Activated CD8-positive, alpha-beta T cell treated with anti-CD3 and anti-CD28 coated beads, Interleukin-2, amount 10 ng/mL, durations not matched to agents 7 days and 5 days (primary cell): ENCODE measurements at regions of chr19 and their contacts with region 1.

Region 1: GRCh38 chr19:12333162-12334159 is at the start of gene ZNF563:
- DNase-seq: peak; percentile 99
- ATAC-seq: peak; percentile 99
- H3K4me3 Mint-ChIP-seq: peak within 1 kb of the TSS; percentile 96
- H3K27ac Mint-ChIP-seq: peak within 1 kb of the TSS; percentile 98
- H3K4me1 Mint-ChIP-seq: peaks cover 27% of the 10 kb centered on the region
- H3K27me3 Mint-ChIP-seq: no peaks in the 10 kb centered on the region
- total RNA-seq, gene ZNF563: 3.1 to 3.2 TPM

Region 2: DNA sequence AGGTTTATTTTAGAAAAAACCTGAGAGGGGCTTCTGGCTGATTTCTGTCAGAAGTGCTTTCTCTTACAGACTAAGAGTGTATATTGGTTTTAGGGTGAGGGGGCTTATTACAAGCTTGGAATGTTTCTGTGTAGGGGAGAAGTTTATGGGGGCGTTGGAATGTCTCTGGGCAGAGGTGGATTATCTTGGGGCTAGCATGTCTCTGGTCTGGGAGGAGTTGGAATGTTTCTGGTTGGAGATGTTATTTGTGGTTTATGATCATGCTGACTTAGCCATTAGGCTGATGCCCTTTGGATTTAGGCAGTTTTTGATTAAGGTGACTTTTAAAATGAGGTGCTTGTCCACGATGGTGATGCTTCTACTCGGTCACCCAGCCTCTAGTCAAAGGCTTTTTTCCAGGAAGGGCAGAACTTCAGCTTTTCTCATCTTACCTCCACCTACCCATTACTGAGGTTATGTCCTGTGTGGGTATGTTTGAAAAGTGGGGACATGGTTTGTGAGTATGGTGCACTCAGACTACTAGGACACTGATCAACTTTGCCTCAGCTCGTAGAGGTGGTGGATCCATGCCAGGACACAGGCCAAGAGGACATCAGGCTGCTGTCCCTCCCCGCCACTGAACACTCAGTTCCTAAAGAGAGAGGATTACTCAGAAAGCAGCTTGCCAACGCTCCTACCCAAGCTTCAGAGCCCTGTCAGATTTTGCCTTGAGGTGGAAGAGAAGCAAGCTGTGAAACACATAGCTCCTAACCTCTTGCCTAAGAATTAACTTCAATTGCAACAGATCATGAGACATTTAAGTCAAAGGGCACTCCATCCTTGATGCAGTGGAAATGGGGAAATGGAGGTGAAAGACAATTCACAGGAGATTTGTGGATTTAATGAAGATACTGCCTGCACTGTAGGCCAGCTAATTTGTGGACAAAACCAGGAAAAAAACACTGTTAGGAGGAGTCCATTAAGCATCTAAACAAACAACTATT is 102.4 kb before region 1 on chr19:
- CTCF ChIA-PET with region 1: no interaction called
- POLR2A ChIA-PET with region 1: no interaction called
- DNase-seq: no peak
- ATAC-seq: no peak
- H3K4me3 Mint-ChIP-seq: no peak overlapping the region
- H3K27ac Mint-ChIP-seq: no peak overlapping the region
- H3K4me1 Mint-ChIP-seq: no peaks in the 10 kb centered on the region
- H3K27me3 Mint-ChIP-seq: no peaks in the 10 kb centered on the region

Region 3: GRCh38 chr19:12287958-12288500 is 45.4 kb before region 1 on chr19:
- CTCF ChIA-PET with region 1: no interaction called
- POLR2A ChIA-PET with region 1: interaction called, 17 read pairs
- DNase-seq: no peak
- ATAC-seq: no peak
- H3K4me3 Mint-ChIP-seq: no peak overlapping the region
- H3K27ac Mint-ChIP-seq: no peak overlapping the region
- H3K4me1 Mint-ChIP-seq: peaks cover 36% of the 10 kb centered on the region
- H3K27me3 Mint-ChIP-seq: no peaks in the 10 kb centered on the region

Region 4: GRCh38 chr19:12294249-12295158 is 39.0 kb before region 1 on chr19 and contains the start of gene ZNF44:
- CTCF ChIA-PET with region 1: interaction called, 4 read pairs
- POLR2A ChIA-PET with region 1: interaction called, 21 read pairs
- DNase-seq: peak; percentile 98
- ATAC-seq: peak; percentile 98
- H3K4me3 Mint-ChIP-seq: peak within 1 kb of the TSS; percentile 99
- H3K27ac Mint-ChIP-seq: peak within 1 kb of the TSS; percentile 99
- H3K4me1 Mint-ChIP-seq: peaks cover 34% of the 10 kb centered on the region
- H3K27me3 Mint-ChIP-seq: no peaks in the 10 kb centered on the region
- total RNA-seq, gene ZNF44: 9.8 to 11.6 TPM

Region 5: GRCh38 chr19:12350890-12351197 is 17.4 kb after region 1 on chr19:
- CTCF ChIA-PET with region 1: no interaction called
- POLR2A ChIA-PET with region 1: no interaction called
- DNase-seq: no peak
- ATAC-seq: no peak
- H3K4me3 Mint-ChIP-seq: no peak overlapping the region
- H3K27ac Mint-ChIP-seq: no peak overlapping the region
- H3K4me1 Mint-ChIP-seq: no peaks in the 10 kb centered on the region
- H3K27me3 Mint-ChIP-seq: no peaks in the 10 kb centered on the region

Region 6: GRCh38 chr19:12365236-12366162 is 32.0 kb after region 1 on chr19 and contains the start of gene ZNF442:
- CTCF ChIA-PET with region 1: interaction called, 8 read pairs
- POLR2A ChIA-PET with region 1: interaction called, 15 read pairs
- DNase-seq: peak; percentile 92
- ATAC-seq: peak; percentile 99
- H3K4me3 Mint-ChIP-seq: peak within 1 kb of the TSS; percentile 89
- H3K27ac Mint-ChIP-seq: peak within 1 kb of the TSS; percentile 86
- H3K4me1 Mint-ChIP-seq: peaks cover 23% of the 10 kb centered on the region
- H3K27me3 Mint-ChIP-seq: no peaks in the 10 kb centered on the region
- total RNA-seq, gene ZNF442: 1.3 to 2.0 TPM

Region 7: DNA sequence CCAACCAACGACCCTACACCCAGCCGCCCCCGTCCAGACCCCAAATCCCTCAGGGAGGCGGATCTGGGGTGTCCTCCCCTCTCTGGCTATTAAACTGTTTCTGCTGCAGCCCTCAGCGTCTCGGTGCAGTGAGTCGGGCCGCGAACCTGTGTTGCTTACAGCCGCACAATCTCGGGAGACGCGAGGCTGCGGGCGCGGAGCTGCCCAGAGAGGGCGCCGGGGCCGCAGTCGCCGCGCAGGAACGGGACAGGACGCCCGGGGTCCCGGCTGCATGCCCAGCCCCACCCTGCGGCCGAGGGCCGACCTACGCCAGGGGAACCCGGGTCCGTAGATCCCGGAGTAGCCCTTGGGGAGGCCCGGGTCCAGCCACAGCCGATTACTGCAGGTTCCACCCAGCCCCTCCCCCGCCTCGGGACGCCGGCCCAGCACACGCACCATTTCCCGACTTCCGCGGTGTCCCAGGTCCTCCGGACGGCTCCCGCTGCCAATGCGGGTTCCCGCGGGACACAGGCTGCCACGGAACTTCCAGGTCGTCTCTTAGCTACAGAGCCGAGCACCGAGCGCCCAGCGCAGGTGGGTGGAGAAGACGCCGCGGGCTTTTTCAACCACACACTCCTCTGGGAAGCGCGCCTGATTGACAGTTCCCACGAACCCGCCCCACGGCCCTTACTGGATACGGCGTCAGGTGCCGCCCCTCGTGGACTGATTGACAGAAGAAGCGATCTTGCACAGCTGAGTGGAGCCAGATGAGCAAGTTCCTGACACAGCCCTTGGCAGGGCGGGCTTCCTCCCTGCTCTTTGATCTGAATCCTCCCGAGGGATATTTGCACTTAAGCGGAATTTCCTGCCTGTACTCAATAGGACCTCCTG is 67.4 kb after region 1 on chr19 and contains the start of gene ZNF799:
- CTCF ChIA-PET with region 1: no interaction called
- POLR2A ChIA-PET with region 1: no interaction called
- DNase-seq: peak; percentile 92
- ATAC-seq: peak; percentile 97
- H3K4me3 Mint-ChIP-seq: peak within 1 kb of the TSS; percentile 90
- H3K27ac Mint-ChIP-seq: peak within 1 kb of the TSS; percentile 82
- H3K4me1 Mint-ChIP-seq: peaks cover 9% of the 10 kb centered on the region
- H3K27me3 Mint-ChIP-seq: no peaks in the 10 kb centered on the region
- total RNA-seq, gene ZNF799: 4.5 to 4.7 TPM

Region 8: DNA sequence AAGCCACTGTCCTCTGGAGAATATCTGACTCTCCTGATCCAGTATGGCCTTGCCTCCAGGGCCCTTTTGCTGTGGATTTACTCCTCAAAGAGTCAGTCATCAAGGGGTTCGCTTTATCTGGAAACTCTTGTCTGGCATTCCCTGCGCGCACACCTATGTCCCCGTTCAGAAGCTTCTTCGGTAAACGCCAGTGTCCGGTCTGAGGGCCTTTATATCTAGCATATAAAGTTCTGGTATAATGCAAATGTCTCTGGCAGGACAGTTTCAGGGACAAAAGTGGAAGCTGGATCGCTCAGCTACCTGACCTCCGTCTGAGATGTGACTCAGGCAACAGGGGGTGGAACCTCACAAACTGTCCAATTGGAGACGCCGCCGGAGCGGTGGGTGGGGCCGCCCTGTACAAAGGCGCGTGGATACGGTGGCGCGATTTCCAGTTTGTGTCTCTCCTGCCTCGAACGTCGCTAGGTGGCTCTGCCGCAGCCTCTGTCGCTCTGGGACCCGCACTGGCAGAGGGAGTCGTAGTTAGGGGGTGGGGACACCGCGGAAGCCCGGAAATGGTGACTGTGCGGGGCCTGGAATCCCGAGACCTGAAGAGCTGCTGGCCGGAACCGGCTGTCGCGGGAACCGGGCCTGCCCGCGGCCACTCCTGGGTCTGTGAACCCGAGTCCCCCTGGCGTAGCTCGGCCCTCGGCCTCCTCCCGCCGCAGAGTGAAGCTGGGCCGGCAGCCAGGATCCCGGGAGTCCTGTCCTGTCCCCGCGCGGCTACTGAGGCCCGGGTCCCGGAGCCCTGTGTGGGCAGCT is 161.7 kb after region 1 on chr19:
- CTCF ChIA-PET with region 1: interaction called, 6 read pairs
- POLR2A ChIA-PET with region 1: interaction called, 12 read pairs
- DNase-seq: peak; percentile 95
- ATAC-seq: peak; percentile 99
- H3K4me3 Mint-ChIP-seq: peak overlapping the region; percentile 81
- H3K27ac Mint-ChIP-seq: peak overlapping the region; percentile 83
- H3K4me1 Mint-ChIP-seq: peaks cover 15% of the 10 kb centered on the region
- H3K27me3 Mint-ChIP-seq: no peaks in the 10 kb centered on the region